Posterior vena cava (tissue), 2 donors: ENCODE measurements at regions of chr3 and their contacts with region 1.

Region 1: GRCh38 chr3:18215639-18216038 is 209.5 kb downstream of the SATB1 start:
- DNase-seq: no peak

Region 2: GRCh38 chr3:18237251-18238005 is 21.8 kb after region 1 on chr3:
- intact Hi-C with region 1: loop called in 1 of 2 experiments (anchors 1 kb)
- DNase-seq: no peak